SK-N-SH (cell line): ENCODE measurements at regions of chr11 and their contacts with region 1.

Region 1: DNA sequence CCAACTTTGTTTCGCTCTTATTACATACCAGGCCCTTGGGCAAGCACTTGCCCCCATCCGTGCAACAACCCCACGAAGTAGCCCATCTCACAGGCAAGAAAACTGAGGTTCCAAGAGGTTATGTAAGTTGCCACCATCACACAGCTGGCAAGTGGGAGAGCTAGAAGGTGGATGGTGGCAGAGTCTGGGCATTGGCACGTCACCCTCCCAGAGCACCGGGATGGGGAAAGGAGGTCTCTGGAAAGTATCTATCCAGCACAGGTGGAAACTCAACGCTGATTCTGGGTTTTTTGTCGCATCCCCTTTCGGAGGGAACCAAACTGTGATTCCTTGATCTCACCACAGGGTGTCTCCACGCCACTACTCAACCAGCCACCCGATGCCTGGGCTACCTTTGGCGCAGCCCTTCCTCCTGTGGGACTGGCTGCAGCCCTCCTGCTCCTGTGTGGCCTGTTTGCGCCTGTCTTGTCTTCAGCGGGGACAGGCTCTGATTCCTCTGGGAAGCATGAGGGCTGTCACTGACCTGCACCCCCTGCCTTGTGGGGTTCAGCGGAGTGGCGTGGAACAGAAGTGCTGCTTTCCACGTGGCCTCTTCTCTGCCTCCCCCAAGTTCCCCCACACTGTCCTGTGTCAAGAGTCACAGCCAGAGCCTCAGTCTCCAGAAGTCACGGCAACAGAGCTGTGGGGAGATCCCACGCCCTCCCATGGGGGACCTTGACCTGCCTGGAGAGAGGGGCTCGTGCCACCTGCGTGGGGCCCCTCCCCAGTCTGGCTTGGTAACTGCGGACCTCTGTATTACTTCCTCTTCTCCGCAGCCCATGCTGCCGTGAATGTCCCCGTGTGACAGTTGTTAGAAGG is 34.4 kb upstream of the TRIM29 start:
- DNase-seq: peak; percentile 88
- H3K4me3 ChIP-seq: no peak overlapping the region; a peak in 1 of 4 replicates
- H3K27ac ChIP-seq: no peak overlapping the region
- H3K4me1 ChIP-seq: peaks cover 0 to 15% of the 10 kb centered on the region in 2 experiments; a peak in 1 of 4 replicates
- H3K27me3 ChIP-seq: peaks cover 25% of the 10 kb centered on the region; the same call in 1 of the 2 replicates
- CTCF ChIP-seq: peak; percentile 74
- EP300 ChIP-seq: no peak
- RAD21 ChIP-seq: peak; percentile 100

Region 2: GRCh38 chr11:120182790-120183491 is 10.7 kb after region 1 on chr11:
- CTCF ChIA-PET with region 1: interaction called, 33 read pairs
- POLR2A ChIA-PET with region 1: no interaction called
- DNase-seq: no peak
- H3K4me3 ChIP-seq: no peak overlapping the region
- H3K27ac ChIP-seq: no peak overlapping the region
- H3K4me1 ChIP-seq: peaks cover 5 to 51% of the 10 kb centered on the region in 2 experiments; a peak in 2 of 4 replicates
- H3K27me3 ChIP-seq: no peaks in the 10 kb centered on the region
- CTCF ChIP-seq: peak; percentile 42
- EP300 ChIP-seq: no peak
- RAD21 ChIP-seq: peak; percentile 42

Region 3: DNA sequence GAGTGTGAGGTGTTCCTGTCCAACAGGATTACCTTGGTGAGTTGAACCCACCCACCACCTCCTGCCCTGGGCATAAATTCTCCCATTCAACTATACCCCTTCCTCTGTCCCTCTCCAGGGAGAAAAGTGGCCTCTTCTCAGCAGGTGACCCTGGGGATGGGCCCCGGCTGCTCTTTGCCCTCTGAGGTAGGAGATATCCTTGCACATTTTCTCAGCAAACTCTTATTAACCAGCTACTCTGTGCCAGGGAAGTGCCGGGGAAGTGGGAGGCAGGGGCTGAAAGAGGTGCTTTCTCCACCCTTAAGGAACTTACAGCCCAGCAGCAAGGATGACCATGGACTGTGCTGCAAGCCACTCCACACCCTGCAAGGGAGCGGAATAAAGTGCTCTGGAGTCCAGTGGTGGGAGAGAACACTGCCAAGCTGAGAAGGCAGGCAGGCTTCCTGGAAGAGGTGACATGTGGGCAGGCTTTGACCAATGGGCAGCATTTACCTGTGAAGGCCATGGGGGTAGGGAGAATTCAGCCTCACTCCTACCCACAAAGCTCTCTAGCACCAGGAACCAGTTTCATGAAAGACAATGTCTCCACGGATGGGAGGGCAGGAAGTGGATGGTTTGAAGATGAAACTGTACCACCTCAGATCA is 16.6 kb after region 1 on chr11:
- CTCF ChIA-PET with region 1: interaction called, 33 read pairs
- POLR2A ChIA-PET with region 1: no interaction called
- DNase-seq: no peak
- H3K4me3 ChIP-seq: no peak overlapping the region
- H3K27ac ChIP-seq: no peak overlapping the region; a peak in 1 of 4 replicates
- H3K4me1 ChIP-seq: peaks cover 0 to 58% of the 10 kb centered on the region in 2 experiments; a peak in 2 of 4 replicates
- H3K27me3 ChIP-seq: peaks cover 15% of the 10 kb centered on the region; the same call in 1 of the 2 replicates
- CTCF ChIP-seq: no peak
- EP300 ChIP-seq: no peak
- RAD21 ChIP-seq: no peak

Region 4: GRCh38 chr11:120210626-120211521 is 38.6 kb after region 1 on chr11 and contains the start of gene OAF:
- CTCF ChIA-PET with region 1: interaction called, 15 read pairs
- POLR2A ChIA-PET with region 1: no interaction called
- DNase-seq: peak; percentile 90
- H3K4me3 ChIP-seq: peak within 1 kb of the TSS; percentile 68 to 69
- H3K27ac ChIP-seq: peak within 1 kb of the TSS in 1 of 2 experiments; percentile 40; a peak in 1 of 4 replicates
- H3K4me1 ChIP-seq: peaks cover 16 to 33% of the 10 kb centered on the region in 2 experiments; a peak in 3 of 4 replicates
- H3K27me3 ChIP-seq: no peaks in the 10 kb centered on the region
- CTCF ChIP-seq: peak; percentile 28; the same call in 1 of the 2 replicates
- EP300 ChIP-seq: no peak
- RAD21 ChIP-seq: no peak
- polyA plus RNA-seq, gene OAF: 27.6 and 28.0 TPM in 2 replicates

Region 5: DNA sequence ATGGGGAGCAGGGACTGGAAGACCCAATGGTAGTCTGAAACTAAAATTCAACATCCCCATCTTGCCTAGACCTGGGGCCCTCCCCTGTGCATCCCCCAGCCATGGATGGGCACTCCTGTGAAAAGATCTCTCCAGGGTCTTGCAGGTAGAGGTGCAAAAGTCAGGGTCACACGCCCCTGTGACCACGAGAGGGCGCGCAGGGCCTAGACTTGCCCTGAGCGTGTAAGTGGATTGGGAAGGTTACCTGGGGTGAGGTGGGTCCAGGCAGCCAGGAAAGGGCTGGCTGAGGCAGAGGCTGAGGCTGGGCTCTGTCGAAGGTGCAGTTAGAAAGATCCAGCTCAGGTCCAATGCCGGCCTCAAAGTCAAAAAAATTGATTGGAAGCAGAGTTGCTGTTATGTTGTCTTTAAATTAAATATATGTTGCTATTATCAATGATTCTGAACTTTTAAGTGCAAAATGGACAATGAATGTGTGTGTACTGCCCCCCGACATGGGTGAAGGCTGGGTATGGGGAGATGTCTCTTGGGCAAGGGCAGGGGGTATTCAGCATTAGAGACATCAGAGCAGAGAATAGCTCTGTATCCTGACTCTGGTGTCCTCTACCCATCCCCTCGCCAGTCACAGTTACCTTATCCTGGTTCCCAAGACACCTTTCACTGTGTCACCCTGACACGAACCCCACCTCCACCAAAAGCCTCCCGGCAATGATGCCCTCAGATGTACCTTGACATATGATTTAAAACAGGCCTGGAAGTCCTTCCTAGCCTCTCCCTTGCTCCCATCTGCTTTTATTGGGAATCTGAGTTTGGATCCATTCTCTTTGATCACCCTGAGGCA is 63.0 kb after region 1 on chr11:
- CTCF ChIA-PET with region 1: interaction called, 400 read pairs
- POLR2A ChIA-PET with region 1: no interaction called
- DNase-seq: peak; percentile 78
- H3K4me3 ChIP-seq: no peak overlapping the region; a peak in 1 of 4 replicates
- H3K27ac ChIP-seq: no peak overlapping the region
- H3K4me1 ChIP-seq: peaks cover 0 to 5% of the 10 kb centered on the region in 2 experiments; a peak in 1 of 4 replicates
- H3K27me3 ChIP-seq: peaks cover 7% of the 10 kb centered on the region; the same call in 1 of the 2 replicates
- CTCF ChIP-seq: peak; percentile 73
- EP300 ChIP-seq: no peak
- RAD21 ChIP-seq: peak; percentile 84

Region 6: GRCh38 chr11:120248551-120249278 is 76.4 kb after region 1 on chr11:
- CTCF ChIA-PET with region 1: interaction called, 17 read pairs
- POLR2A ChIA-PET with region 1: no interaction called
- DNase-seq: no peak
- H3K4me3 ChIP-seq: no peak overlapping the region
- H3K27ac ChIP-seq: no peak overlapping the region; a peak in 1 of 4 replicates
- H3K4me1 ChIP-seq: peaks cover 6 to 12% of the 10 kb centered on the region in 2 experiments; a peak in 3 of 4 replicates
- H3K27me3 ChIP-seq: peaks cover 5% of the 10 kb centered on the region; the same call in 1 of the 2 replicates
- CTCF ChIP-seq: no peak
- EP300 ChIP-seq: no peak
- RAD21 ChIP-seq: no peak

Region 7: DNA sequence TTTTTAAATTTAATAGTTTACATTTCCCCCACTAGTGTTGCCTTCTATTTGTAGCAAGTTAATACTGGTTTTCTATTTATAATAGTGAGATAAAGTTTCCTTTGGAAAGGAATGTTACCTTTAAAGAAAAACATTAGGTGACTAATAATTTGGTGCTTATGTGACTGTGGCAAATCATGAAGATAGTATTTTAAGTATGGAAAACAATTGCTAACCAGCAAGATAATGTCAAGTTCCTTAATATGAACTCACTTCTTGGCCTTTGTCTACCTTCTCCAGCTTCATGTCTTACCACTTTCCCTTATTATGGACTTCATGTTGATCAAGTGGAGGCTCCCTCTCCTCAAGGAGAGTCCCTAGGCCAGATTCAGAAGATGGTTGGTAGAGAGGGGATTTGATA is 191.2 kb after region 1 on chr11:
- CTCF ChIA-PET with region 1: no interaction called
- POLR2A ChIA-PET with region 1: no interaction called
- DNase-seq: no peak
- H3K4me3 ChIP-seq: no peak overlapping the region
- H3K27ac ChIP-seq: peak overlapping the region in 1 of 2 experiments; percentile 33; a peak in 1 of 4 replicates
- H3K4me1 ChIP-seq: peaks cover 0 to 14% of the 10 kb centered on the region in 2 experiments; a peak in 1 of 4 replicates
- H3K27me3 ChIP-seq: no peaks in the 10 kb centered on the region
- CTCF ChIP-seq: no peak
- EP300 ChIP-seq: no peak
- RAD21 ChIP-seq: no peak

Region 8: DNA sequence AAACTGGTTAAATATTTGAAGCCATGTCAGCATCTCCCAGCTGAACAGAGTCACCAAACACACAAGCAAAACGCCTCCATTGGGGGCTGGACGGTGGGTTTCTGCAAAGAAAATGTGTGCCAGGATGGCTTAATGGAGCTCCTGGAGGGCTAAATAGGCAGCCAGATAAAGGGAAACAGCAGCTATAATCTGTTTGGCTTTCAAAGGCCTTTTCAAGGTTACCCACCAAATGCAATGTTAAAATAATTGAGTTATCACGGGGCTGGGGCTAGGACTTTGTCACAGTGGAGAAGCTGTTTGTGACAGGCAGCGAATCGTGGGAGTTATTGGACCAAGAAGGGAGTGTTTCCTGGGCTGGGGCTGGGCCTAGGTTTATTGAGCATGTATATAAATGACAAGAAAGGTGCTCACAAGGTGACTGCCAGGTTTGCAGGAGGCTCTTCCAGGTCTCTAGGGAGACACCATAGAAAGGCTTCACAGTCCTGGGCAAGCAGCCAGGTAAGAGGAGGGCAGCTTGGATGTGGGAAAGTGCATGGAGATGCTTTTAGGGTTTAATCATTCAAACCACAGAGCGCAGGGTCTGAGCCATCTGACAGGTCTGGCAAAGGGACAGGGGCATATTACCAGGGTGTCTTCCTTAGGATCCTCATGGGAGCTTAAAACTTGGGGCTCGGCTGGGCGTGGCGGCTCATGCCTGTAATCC is 367.5 kb after region 1 on chr11:
- CTCF ChIA-PET with region 1: no interaction called
- POLR2A ChIA-PET with region 1: no interaction called
- DNase-seq: peak; percentile 72
- H3K4me3 ChIP-seq: no peak overlapping the region
- H3K27ac ChIP-seq: peak overlapping the region in 1 of 2 experiments; percentile 86; a peak in 2 of 4 replicates
- H3K4me1 ChIP-seq: peaks cover 0 to 25% of the 10 kb centered on the region in 2 experiments; a peak in 2 of 4 replicates
- H3K27me3 ChIP-seq: no peaks in the 10 kb centered on the region
- CTCF ChIP-seq: no peak
- EP300 ChIP-seq: peak in 1 of 2 experiments; percentile 76; a peak in 2 of 4 replicates
- RAD21 ChIP-seq: no peak; the same call in 1 of the 2 replicates